ENCODE measurements at regions of chr17 and their contacts with region 1.

Region 1: GRCh38 chr17:73156166-73156840 is 8.5 kb upstream of the SSTR2 start:
- DNase-seq: peak; percentile 83
- ATAC-seq: peak; percentile 98

Region 2: DNA sequence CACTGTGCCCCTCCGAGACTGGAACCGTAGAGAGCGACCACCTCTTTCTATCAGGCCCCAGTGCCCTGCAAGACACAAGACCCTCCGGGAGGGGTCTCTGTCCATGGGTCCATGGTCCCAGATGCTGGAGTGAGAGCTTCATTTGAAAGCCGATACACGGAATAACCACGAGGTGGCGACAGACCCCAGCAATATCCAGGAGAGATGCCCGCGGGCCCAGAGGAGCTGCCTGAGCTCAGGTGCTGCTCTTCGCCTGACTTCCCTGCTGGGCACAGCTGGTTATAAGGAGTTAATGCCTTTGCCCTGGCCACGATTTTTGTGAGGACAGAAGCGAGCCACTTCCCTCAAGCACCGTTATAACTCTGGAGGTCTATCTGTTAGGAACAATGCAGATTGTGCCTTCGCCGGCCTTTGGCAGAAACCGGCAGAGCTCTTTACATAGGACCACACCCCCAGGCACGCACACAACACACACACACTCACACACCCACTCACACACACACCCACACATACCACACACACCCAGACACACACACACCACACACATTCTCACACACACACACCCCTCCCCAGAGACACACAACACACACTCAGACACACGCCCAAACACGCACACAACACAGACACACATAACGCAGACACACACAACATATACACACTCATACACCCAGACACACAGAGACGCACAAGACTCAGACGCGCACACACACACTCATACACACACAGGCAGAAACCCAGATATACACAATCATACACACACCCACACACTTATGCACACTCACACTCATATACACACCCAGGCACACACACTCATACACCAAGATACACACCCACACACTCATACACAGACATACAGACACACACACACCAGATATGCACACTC is 599.1 kb before region 1 on chr17:
- intact Hi-C with region 1: loop called (anchors 10 kb)
- DNase-seq: peak; percentile 66
- ATAC-seq: peak; percentile 62

Region 3: GRCh38 chr17:72725433-72726068 is 430.8 kb before region 1 on chr17:
- intact Hi-C with region 1: loop called (anchors 10 kb)
- DNase-seq: peak; percentile 62
- ATAC-seq: peak; percentile 79

Region 4: DNA sequence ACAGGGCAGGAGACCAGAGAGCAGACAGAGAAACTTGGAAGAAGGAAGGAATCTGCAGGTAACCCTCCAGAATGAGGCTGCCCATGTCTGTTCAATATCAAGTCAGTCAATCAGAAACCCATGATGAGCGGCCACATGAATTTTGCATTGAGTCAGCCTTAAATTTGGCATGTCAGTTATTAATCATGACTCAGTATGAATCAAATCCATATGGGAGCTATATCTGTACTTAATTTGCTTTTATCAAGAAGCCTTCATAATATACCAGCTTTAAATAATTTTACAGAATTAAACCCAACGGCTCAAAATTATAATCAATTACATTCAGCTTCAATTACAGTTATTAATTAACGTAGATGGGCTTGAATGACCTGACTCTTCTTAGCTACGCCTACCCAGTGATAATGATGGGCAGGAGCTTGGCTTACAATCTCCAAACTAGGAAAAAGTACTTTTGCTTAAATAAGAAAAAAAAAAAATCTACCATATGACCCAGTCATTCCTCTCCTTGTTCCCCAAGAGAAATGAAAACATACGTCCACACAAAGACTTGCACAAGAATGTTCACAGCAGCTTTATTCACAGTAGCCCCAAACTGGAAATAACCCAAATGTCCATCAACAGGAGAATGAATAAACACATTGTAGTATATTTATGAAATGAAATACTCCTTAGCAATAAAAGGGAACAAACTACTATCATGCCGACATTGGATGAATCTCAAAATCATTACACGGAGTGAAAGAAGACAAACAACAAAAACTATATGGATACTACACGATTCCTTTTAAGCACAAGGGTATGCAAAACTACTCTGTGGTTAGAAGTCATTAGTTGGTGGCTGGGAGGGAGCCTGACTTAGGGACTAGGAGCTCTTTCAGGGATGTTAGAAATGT is 112.4 kb before region 1 on chr17:
- intact Hi-C with region 1: no loop called
- DNase-seq: no peak
- ATAC-seq: peak; percentile 61